ENCODE measurements at regions of chr22 and their contacts with region 1.

Region 1: DNA sequence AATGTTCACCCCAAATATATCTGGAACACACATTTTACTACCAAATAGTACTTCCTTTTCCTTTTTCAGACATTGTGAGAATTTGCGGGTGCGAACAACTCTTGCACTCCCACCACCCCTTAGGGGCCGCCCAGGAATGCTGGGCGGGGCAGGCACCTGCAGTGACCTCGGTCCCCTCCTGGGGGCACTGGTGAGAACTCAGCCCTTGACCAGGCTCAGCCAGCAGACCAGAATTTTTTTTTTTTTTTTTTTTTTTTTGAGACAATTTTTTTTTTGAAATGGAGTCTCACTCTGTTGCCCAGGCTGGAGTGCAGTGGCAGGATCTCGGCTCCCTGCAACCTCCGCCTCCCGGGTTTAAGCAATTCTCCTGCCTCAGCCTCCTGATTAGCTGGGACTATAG is 75.8 kb downstream of the ARHGAP8 start:
- DNase-seq: no peak
- ATAC-seq: peak; percentile 71
- H3K4me3 ChIP-seq: no peak overlapping the region
- H3K27ac ChIP-seq: no peak overlapping the region
- H3K4me1 ChIP-seq: no peaks in the 10 kb centered on the region
- H3K27me3 ChIP-seq: no peaks in the 10 kb centered on the region
- CTCF ChIP-seq: peak; percentile 37 to 68 (median 41); a peak in 5 of 6 replicates
- EP300 ChIP-seq: no peak
- POLR2A ChIP-seq: no peak
- RAD21 ChIP-seq: no peak

Region 2: GRCh38 chr22:44735540-44736488 is 92.4 kb before region 1 on chr22:
- CTCF ChIA-PET with region 1: no interaction called
- POLR2A ChIA-PET with region 1: no interaction called
- RAD21 ChIA-PET with region 1: no interaction called
- SMC1A ChIA-PET with region 1: no interaction called
- in situ Hi-C with region 1: no loop called
- intact Hi-C with region 1: no loop called
- DNase-seq: no peak
- ATAC-seq: peak; percentile 90
- H3K4me3 ChIP-seq: no peak overlapping the region
- H3K27ac ChIP-seq: no peak overlapping the region
- H3K4me1 ChIP-seq: no peaks in the 10 kb centered on the region
- H3K27me3 ChIP-seq: no peaks in the 10 kb centered on the region
- CTCF ChIP-seq: peak; percentile 92 to 98 (median 96)
- EP300 ChIP-seq: no peak
- POLR2A ChIP-seq: no peak
- RAD21 ChIP-seq: peak; percentile 90

Region 3: DNA sequence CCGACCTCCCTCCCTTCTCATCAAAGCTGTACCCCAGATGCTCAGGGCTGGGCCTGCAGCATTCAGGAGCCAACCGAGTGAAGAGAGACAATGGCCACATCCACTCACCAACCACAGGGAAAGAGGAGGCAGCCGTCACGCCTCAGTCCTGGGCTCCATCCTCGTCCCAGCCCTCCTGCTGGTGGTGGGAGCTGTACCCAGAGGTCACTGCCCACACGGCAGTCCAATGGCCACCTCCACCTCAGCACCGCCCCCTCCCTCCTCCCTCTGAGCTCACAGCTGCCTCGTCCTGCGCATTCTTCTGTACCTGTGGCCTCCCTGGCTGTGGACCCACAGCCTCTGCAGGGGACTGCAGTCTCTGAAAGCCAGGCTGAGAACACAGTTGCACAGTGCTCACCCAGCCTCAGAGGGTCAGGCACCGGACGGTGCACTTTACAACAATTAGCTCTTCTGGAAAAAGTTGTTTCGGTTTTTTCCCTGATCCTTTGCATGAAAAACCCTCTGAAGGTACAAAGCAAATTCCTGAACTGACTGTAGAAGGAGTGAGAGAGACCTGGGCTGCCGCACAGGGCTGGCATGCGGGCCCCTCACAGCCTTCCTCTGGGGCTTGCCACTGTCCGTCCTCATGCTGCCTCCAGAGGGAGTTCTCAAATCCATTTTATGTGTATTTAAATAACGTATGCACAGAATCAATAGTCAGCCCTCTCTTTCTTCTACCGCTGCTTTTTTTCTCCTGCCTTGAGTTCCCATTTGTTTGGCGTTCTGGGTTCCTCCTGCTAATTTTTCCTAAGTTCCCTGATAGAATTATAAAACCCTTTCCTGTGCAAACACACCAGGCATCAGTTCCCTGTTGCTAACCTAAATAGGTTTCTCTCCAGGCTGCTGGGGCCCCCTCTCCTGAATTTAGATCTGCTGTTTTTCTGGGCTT is 128.9 kb after region 1 on chr22:
- CTCF ChIA-PET with region 1: no interaction called
- POLR2A ChIA-PET with region 1: no interaction called
- RAD21 ChIA-PET with region 1: no interaction called
- SMC1A ChIA-PET with region 1: no interaction called
- in situ Hi-C with region 1: no loop called
- intact Hi-C with region 1: loop called (anchors 10 kb)
- DNase-seq: no peak
- ATAC-seq: no peak
- H3K4me3 ChIP-seq: no peak overlapping the region
- H3K27ac ChIP-seq: no peak overlapping the region; the same call in 1 of the 2 replicates
- H3K4me1 ChIP-seq: peaks cover 37% of the 10 kb centered on the region
- H3K27me3 ChIP-seq: no peaks in the 10 kb centered on the region
- CTCF ChIP-seq: no peak
- EP300 ChIP-seq: no peak
- POLR2A ChIP-seq: no peak
- RAD21 ChIP-seq: no peak

Region 4: GRCh38 chr22:45309472-45310227 is 481.5 kb after region 1 on chr22 and contains the start of gene FAM118A:
- CTCF ChIA-PET with region 1: no interaction called
- POLR2A ChIA-PET with region 1: no interaction called
- RAD21 ChIA-PET with region 1: no interaction called
- SMC1A ChIA-PET with region 1: no interaction called
- in situ Hi-C with region 1: no loop called
- intact Hi-C with region 1: no loop called
- DNase-seq: peak; percentile 81
- ATAC-seq: peak; percentile 91
- H3K4me3 ChIP-seq: peak within 1 kb of the TSS; percentile 96
- H3K27ac ChIP-seq: peak within 1 kb of the TSS; percentile 63
- H3K4me1 ChIP-seq: peaks cover 25% of the 10 kb centered on the region
- H3K27me3 ChIP-seq: no peaks in the 10 kb centered on the region
- CTCF ChIP-seq: peak in 1 of 3 experiments; percentile 10; a peak in 1 of 6 replicates
- EP300 ChIP-seq: no peak
- POLR2A ChIP-seq: peak; percentile 89
- RAD21 ChIP-seq: no peak
- polyA plus RNA-seq, gene FAM118A: 17.4 to 20.1 TPM